ENCODE measurements at regions of chr1 and their contacts with region 1.

Region 1: DNA sequence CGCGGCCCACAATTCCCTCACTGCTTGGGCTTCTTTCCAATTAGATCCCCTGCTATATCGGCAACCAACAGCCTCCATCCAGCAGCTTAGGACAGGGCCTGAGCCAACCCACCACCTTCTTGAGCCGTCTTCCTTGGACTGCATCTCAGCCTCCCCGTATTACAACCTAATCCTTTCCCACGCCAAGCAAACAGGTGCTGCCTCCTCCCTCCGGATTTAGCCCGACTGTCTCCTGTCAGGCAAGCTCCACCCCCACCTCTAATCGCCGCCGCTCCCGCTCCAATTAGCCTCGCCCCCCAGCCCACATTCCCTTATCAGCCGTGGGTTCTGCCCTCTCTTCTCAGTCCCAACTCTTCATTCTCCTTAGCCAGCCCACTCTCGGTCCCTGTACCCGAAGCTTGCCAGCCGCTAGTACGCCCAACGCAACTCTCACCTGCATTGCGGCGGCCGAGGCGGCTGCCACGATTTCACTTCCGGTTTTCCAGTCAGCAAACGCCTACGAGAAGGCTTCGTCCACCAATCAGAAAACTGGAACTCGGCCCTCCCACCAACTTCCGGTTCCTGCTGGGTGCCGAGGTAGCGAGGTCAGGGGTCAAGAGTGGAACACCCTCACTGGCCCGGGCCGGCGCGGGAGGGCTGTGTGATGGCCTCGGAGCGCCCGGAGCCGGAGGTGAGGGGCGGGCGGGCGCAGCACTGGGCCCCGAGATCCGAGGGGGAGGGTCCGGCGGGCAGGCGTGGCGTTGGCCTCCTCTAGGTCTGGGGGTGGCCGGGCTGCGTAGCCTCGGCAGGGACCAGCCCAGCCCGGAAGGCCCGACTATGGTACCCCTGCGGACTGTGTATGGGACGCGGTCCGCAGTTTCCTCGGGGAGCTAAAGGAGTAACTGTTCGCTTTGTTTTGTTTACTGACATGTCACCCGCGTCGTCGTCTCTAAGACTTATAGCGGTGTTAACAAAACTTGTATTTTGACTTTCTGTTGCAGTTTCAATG is at the starts of genes MED8 and SZT2:
- DNase-seq: peak; percentile 94 to 98 (median 96)
- H3K4me3 ChIP-seq: peak within 1 kb of the TSS; percentile 54 to 94 (median 78)
- H3K4me3 Mint-ChIP-seq: peak within 1 kb of the TSS; percentile 100
- H3K27ac ChIP-seq: peak within 1 kb of the TSS; percentile 24 to 88
- H3K27ac Mint-ChIP-seq: peak within 1 kb of the TSS; percentile 97 to 100 (median 98)
- H3K4me1 ChIP-seq: peaks cover 18 to 30% of the 10 kb centered on the region in 2 donors
- H3K4me1 Mint-ChIP-seq: peaks cover 26% of the 10 kb centered on the region
- H3K27me3 ChIP-seq: no peaks in the 10 kb centered on the region
- H3K27me3 Mint-ChIP-seq: no peaks in the 10 kb centered on the region
- CTCF ChIP-seq: no peak
- polyA plus RNA-seq, gene MED8: 16.6 to 41.8 (median 40.7) TPM
- polyA plus RNA-seq, gene SZT2: 2.4 to 29.9 (median 2.6) TPM

Region 2: GRCh38 chr1:43349584-43350306 is 39.9 kb before region 1 on chr1:
- intact Hi-C with region 1: loop called in 1 of 2 experiments (anchors 5 kb)
- DNase-seq: no peak
- H3K4me3 ChIP-seq: peak overlapping the region in 1 of 3 experiments; percentile 63
- H3K4me3 Mint-ChIP-seq: peak overlapping the region; percentile 77 to 88
- H3K27ac ChIP-seq: no peak overlapping the region
- H3K27ac Mint-ChIP-seq: peak overlapping the region in 4 of 7 donors; percentile 7 to 72 (median 52)
- H3K4me1 ChIP-seq: no peaks in the 10 kb centered on the region
- H3K4me1 Mint-ChIP-seq: peaks cover 16% of the 10 kb centered on the region
- H3K27me3 ChIP-seq: no peaks in the 10 kb centered on the region
- H3K27me3 Mint-ChIP-seq: peaks cover 2 to 5% (median 2%) of the 10 kb centered on the region in 3 donors
- CTCF ChIP-seq: no peak

Region 3: DNA sequence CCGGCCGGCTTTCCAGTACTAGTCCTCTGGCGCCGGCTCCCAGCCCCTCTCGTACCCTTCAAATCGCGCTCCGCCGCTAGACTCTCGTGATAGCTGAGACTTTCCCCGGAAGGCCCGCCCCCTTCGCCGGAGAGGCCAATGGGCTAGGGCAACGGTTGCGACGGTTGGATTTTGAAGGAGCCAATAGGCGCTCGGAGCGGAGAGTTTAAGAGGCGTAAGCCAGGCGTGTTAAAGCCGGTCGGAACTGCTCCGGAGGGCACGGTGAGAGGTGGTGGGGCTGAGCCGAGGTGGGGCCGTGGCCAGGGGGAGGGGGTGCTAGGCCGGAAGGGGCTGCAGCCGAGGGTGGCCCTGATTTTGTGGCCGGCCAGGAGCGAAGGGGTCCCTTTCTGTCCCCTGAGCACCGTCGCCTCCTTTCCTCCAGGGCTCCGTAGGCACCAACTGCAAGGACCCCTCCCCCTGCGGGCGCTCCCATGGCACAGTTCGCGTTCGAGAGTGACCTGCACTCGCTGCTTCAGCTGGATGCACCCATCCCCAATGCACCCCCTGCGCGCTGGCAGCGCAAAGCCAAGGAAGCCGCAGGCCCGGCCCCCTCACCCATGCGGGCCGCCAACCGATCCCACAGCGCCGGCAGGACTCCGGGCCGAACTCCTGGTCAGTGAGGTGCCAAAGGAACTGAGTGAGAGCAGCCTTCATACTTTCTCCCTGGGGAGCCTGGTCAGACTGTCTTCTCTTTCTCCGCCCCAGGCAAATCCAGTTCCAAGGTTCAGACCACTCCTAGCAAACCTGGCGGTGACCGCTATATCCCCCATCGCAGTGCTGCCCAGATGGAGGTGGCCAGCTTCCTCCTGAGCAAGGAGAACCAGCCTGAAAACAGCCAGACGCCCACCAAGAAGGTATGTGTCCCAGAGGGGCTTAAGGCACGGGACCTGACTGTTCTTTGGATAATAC is 30.6 kb before region 1 on chr1 and contains the start of gene CDC20:
- intact Hi-C with region 1: loop called (anchors 2 to 5 kb)
- DNase-seq: peak; percentile 91 to 96 (median 91)
- H3K4me3 ChIP-seq: peak within 1 kb of the TSS; percentile 81 to 88 (median 82)
- H3K4me3 Mint-ChIP-seq: peak within 1 kb of the TSS; percentile 87 to 97
- H3K27ac ChIP-seq: peak within 1 kb of the TSS; percentile 84 to 85
- H3K27ac Mint-ChIP-seq: peak within 1 kb of the TSS; percentile 90 to 98 (median 93)
- H3K4me1 ChIP-seq: peaks cover 49 to 62% of the 10 kb centered on the region in 2 donors
- H3K4me1 Mint-ChIP-seq: peaks cover 58% of the 10 kb centered on the region
- H3K27me3 ChIP-seq: no peaks in the 10 kb centered on the region
- H3K27me3 Mint-ChIP-seq: no peaks in the 10 kb centered on the region
- CTCF ChIP-seq: no peak
- polyA plus RNA-seq, gene CDC20: 0.08 to 0.10 TPM in 2 of 3 donors, not detected in the other

Region 4: DNA sequence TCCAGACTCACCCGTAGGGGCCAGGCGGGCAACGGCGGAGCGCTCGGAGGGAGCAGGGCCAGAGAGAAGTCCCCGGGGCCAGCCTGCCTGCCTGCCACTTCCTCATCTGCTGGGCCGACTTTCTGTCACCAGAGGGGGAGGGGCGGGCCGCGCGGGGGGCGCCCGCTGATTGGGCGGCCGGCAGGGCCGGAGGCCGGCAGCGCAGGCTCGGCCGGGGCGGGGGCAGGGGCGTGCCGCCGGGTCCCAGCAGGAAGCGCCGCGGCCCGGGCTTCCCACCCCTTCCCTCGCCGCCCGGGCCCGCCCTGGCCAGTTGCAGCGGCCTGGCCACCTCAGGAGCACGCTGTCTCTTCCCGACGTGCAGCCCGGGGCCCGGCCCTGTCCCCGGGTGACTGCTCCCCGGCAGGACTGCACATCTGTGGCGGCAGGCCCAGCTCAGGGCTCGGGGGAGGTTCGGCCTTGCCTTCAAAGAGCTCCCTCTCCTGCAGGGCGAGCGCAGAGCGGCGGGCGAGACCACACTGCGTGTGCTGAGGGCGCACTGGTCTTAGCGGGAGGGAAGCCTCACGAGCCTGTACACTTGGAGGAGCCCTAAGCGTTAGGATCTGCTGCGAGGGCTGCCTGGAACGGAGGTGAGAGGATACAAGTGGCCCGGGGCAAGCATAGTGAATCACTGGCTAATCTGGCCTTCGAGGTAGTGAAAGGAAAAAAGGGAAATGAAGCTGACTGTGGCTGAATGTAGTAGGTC is 21.5 kb before region 1 on chr1 and contains the start of gene ELOVL1:
- intact Hi-C with region 1: loop called in 1 of 2 experiments (anchors 2 kb)
- DNase-seq: peak; percentile 89 to 93 (median 90)
- H3K4me3 ChIP-seq: peak within 1 kb of the TSS; percentile 79 to 98 (median 98)
- H3K4me3 Mint-ChIP-seq: peak within 1 kb of the TSS; percentile 86 to 98
- H3K27ac ChIP-seq: peak within 1 kb of the TSS; percentile 81 to 97
- H3K27ac Mint-ChIP-seq: peak within 1 kb of the TSS; percentile 95 to 99 (median 97)
- H3K4me1 ChIP-seq: peaks cover 38 to 63% of the 10 kb centered on the region in 2 donors
- H3K4me1 Mint-ChIP-seq: peaks cover 53% of the 10 kb centered on the region
- H3K27me3 ChIP-seq: no peaks in the 10 kb centered on the region
- H3K27me3 Mint-ChIP-seq: no peaks in the 10 kb centered on the region
- CTCF ChIP-seq: no peak
- polyA plus RNA-seq, gene ELOVL1: 135 to 151 (median 148) TPM

Region 5: DNA sequence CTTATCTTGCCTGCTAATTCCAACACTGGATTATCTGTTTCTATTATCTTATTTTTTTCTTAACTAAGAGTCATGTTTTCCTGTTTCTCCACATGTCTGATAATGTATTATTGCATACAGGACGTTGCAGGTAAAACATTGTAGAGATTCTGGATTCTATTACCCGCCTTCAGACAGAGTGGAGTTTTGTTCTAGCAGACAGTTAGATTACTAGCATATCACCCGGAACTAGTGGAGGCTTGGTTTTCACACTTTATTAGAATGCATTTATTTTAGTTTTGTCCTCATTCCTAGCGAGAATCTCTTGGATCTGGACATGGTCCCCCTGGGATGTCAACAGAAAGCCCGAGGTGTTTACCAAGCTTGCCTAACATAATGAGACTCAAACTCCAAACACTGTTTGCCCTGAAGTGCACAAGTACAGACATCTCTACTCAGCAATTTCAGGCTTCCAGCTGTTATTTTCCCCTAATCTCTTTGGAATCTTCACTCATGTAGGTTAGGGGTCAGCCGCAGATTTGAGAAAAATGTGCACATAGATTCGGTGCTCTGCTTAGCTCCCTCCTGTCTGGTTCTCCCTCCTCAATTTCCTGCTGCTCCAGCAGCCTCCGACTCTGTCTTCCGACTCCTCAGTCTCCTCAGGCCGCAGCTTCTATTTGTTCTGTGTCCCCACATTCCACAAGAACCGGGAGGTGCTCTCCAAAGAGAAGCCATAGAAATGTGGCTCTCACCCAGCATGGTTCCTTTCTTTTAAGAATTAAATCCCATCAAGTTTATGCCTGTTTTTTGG is 104.2 kb after region 1 on chr1:
- intact Hi-C with region 1: no loop called
- DNase-seq: no peak
- H3K4me3 ChIP-seq: no peak overlapping the region
- H3K4me3 Mint-ChIP-seq: no peak overlapping the region
- H3K27ac ChIP-seq: no peak overlapping the region
- H3K27ac Mint-ChIP-seq: peak overlapping the region in 1 of 7 donors; percentile 71
- H3K4me1 ChIP-seq: no peaks in the 10 kb centered on the region
- H3K4me1 Mint-ChIP-seq: no peaks in the 10 kb centered on the region
- H3K27me3 ChIP-seq: peaks cover 0 to 3% of the 10 kb centered on the region in 2 donors
- H3K27me3 Mint-ChIP-seq: peaks cover 2 to 15% (median 3%) of the 10 kb centered on the region in 3 donors
- CTCF ChIP-seq: no peak

Region 6: DNA sequence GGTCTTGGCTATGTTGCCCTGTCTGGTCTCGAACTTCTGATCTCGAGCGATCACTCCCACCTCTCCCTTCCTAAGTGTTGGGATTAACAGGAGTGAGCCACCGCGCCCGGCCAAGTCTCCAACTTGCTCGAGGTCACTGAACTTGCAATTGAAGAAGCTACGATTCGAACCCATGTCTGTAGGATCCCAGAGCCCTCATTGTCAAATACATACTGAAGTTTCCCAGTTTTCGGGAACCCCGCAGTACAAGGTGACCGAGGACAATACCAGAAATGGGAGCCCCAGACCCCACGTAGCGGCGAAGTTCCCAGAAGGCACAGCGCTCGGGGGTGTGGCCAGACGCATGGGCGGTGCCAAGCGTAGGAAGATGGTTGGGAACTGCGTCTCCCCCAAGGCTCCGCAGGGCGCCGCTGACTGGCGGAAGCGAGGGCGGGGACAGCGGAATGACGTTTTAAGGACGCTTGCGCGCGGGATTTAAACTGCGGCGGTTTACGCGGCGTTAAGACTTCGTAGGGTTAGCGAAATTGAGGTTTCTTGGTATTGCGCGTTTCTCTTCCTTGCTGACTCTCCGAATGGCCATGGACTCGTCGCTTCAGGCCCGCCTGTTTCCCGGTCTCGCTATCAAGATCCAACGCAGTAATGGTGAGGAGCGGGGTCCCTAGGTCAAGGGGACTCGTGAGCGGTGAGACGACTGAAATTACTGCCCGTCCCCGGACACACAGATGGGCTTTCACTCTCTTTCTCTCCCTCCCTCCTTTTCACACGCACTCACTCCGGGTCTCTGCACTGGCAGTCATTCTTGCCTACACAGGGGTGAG is 1350.0 kb after region 1 on chr1 and contains the start of gene KIF2C:
- intact Hi-C with region 1: no loop called
- DNase-seq: peak; percentile 96 to 98 (median 96)
- H3K4me3 ChIP-seq: peak within 1 kb of the TSS; percentile 73 to 93 (median 93)
- H3K4me3 Mint-ChIP-seq: peak within 1 kb of the TSS; percentile 95 to 96
- H3K27ac ChIP-seq: peak within 1 kb of the TSS; percentile 71 to 95
- H3K27ac Mint-ChIP-seq: peak within 1 kb of the TSS; percentile 95 to 98 (median 96)
- H3K4me1 ChIP-seq: peaks cover 20 to 25% of the 10 kb centered on the region in 2 donors
- H3K4me1 Mint-ChIP-seq: peaks cover 30% of the 10 kb centered on the region
- H3K27me3 ChIP-seq: no peaks in the 10 kb centered on the region
- H3K27me3 Mint-ChIP-seq: peaks cover 0 to 5% (median 0%) of the 10 kb centered on the region in 3 donors
- CTCF ChIP-seq: no peak
- polyA plus RNA-seq, gene KIF2C: 0.13 to 0.29 (median 0.24) TPM

Measured in CD14-positive monocyte (primary cell).